H1 (cell line): ENCODE measurements at regions of chr10 and their contacts with region 1.

Region 1: DNA sequence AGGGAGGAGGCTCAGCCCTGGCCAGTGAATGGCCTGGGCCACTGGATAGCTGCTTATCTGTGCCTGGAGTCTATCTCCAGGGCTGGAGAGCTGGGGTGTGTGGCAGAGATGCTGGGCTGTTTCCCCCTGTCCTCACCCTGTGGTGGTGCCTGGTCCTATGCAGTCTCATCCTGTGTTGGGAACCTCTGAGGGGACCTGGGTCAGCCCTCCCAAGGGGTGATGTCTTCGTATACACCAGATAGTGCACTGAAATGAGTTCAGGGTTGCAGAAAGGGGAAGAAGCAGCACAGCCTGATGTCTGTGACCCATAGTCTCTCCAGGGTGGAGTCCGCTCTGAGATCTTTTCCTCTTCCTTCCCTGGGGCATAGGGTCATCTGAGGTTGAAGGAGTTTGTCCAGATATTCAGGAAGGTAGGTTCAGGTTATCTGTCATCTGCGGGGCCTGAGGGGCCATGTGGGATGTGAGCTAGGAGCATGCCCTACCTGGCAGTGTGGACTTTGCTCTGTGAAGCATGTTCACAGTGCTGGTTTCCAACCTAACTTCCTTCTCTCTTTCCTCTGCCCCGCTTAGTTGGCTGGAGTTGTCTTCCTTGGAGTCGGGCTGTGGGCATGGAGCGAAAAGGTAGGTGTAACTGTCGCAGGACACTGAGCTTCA is 33.4 kb upstream of the SH2D4B start:
- DNase-seq: no peak
- H3K4me3 ChIP-seq: no peak overlapping the region
- H3K27ac ChIP-seq: 0 out of 2 replicates have a peak overlapping the region, but pooled peaks have one; percentile 7
- H3K4me1 ChIP-seq: peaks cover 5 to 32% (median 15%) of the 10 kb centered on the region in 4 experiments
- H3K27me3 ChIP-seq: no peaks in the 10 kb centered on the region
- CTCF ChIP-seq: no peak
- EP300 ChIP-seq: no peak
- POLR2A ChIP-seq: no peak
- RAD21 ChIP-seq: no peak

Region 2: GRCh38 chr10:80292607-80293239 is 211.6 kb before region 1 on chr10:
- CTCF ChIA-PET with region 1: no interaction called
- POLR2A ChIA-PET with region 1: no interaction called
- DNase-seq: no peak
- H3K4me3 ChIP-seq: no peak overlapping the region
- H3K27ac ChIP-seq: no peak overlapping the region
- H3K4me1 ChIP-seq: peaks cover 0 to 9% (median 2%) of the 10 kb centered on the region in 4 experiments; a peak in 3 of 7 replicates
- H3K27me3 ChIP-seq: no peaks in the 10 kb centered on the region
- CTCF ChIP-seq: no peak
- EP300 ChIP-seq: no peak
- POLR2A ChIP-seq: no peak
- RAD21 ChIP-seq: no peak

Region 3: GRCh38 chr10:80382989-80383388 is 121.3 kb before region 1 on chr10:
- CTCF ChIA-PET with region 1: interaction called, 106 read pairs
- POLR2A ChIA-PET with region 1: interaction called, 3 read pairs
- DNase-seq: peak in 1 of 2 experiments; percentile 49
- H3K4me3 ChIP-seq: no peak overlapping the region
- H3K27ac ChIP-seq: no peak overlapping the region
- H3K4me1 ChIP-seq: no peaks in the 10 kb centered on the region
- H3K27me3 ChIP-seq: no peaks in the 10 kb centered on the region
- CTCF ChIP-seq: peak in 2 of 3 experiments; percentile 58 to 78; a peak in 3 of 4 replicates
- EP300 ChIP-seq: no peak
- POLR2A ChIP-seq: no peak
- RAD21 ChIP-seq: peak; percentile 82 to 83

Region 4: DNA sequence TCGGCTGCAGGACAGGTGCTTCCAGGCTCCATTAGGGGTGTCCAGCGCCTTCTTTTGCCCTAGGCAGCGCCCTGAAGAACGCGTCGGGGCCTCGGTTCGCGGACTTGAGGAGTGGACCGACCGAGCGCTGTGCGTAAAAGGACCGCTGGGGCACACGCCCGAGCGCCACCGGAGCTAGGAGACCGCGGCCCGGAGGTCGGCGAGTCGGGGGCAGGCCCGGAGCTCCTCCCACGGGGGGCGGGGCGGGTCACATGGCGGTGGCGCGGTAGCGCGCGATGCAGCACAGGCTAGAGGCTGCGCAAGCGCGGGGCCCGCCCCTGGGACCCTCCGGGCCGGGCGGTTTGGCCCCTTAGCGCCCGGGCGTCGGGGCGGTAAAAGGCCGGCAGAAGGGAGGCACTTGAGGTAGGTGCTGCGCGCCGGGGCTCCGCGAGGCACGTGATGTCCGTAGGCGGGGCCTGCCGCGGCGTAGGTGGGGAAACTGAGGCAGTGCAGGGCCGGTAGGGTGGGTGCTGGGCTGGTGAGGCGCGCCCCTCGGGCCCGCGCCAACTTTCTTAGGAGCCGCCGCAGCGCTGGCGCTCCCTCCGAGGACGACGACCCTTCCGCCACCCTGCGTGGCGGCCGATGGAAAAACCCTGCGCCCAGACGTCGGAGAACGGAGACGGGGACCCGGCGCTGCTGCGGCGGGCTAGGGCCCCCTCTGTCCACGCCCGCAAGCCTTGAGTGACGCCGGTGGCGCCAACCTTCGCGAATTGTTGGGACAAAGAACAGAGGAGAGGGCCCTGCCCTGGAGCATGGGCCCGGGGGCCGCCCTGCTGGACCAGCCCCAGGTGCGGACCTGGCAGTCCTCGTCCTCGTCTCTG is 95.8 kb before region 1 on chr10 and contains the start of gene PRXL2A:
- CTCF ChIA-PET with region 1: interaction called, 22 read pairs
- POLR2A ChIA-PET with region 1: interaction called, 4 read pairs
- DNase-seq: peak; percentile 50 to 97
- H3K4me3 ChIP-seq: peak within 1 kb of the TSS; percentile 50 to 65 (median 60)
- H3K27ac ChIP-seq: no peak within 1 kb of the TSS
- H3K4me1 ChIP-seq: peaks cover 0 to 5% (median 2%) of the 10 kb centered on the region in 4 experiments; a peak in 5 of 7 replicates
- H3K27me3 ChIP-seq: peaks cover 0 to 10% (median 6%) of the 10 kb centered on the region in 4 experiments; a peak in 3 of 7 replicates
- CTCF ChIP-seq: no peak
- EP300 ChIP-seq: no peak; a peak in 1 of 3 replicates
- POLR2A ChIP-seq: 0 out of 3 replicates have a peak, but pooled peaks of 1 of the 2 experiments have one; percentile 17
- RAD21 ChIP-seq: no peak
- total RNA-seq, gene PRXL2A: 58.3 and 60.1 TPM in 2 replicates

Region 5: DNA sequence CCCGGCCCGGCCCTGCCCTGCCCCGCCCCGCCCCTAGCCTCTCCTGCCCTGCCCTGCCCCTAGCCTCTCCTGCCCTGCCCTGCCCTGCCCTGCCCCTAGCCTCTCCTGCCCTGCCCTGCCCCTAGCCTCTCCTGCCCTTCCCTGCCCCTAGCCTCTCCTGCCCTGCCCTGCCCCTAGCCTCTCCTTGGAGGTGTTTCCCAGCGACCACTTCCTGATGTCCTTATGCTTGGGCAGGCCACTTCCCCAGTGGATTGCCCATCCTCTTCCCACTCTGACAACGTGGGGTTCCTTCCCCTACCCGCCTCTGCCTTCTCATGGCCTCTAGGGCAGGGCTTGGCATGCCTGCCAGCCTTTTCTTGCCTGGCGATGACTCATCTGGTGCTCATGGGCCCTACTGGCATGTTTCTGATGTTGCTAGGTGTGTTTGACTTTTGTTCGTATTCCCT is 74.7 kb before region 1 on chr10:
- CTCF ChIA-PET with region 1: interaction called, 15 read pairs
- POLR2A ChIA-PET with region 1: no interaction called
- DNase-seq: no peak
- H3K4me3 ChIP-seq: no peak overlapping the region
- H3K27ac ChIP-seq: no peak overlapping the region
- H3K4me1 ChIP-seq: no peaks in the 10 kb centered on the region
- H3K27me3 ChIP-seq: no peaks in the 10 kb centered on the region
- CTCF ChIP-seq: no peak
- EP300 ChIP-seq: no peak
- POLR2A ChIP-seq: no peak
- RAD21 ChIP-seq: no peak

Region 6: DNA sequence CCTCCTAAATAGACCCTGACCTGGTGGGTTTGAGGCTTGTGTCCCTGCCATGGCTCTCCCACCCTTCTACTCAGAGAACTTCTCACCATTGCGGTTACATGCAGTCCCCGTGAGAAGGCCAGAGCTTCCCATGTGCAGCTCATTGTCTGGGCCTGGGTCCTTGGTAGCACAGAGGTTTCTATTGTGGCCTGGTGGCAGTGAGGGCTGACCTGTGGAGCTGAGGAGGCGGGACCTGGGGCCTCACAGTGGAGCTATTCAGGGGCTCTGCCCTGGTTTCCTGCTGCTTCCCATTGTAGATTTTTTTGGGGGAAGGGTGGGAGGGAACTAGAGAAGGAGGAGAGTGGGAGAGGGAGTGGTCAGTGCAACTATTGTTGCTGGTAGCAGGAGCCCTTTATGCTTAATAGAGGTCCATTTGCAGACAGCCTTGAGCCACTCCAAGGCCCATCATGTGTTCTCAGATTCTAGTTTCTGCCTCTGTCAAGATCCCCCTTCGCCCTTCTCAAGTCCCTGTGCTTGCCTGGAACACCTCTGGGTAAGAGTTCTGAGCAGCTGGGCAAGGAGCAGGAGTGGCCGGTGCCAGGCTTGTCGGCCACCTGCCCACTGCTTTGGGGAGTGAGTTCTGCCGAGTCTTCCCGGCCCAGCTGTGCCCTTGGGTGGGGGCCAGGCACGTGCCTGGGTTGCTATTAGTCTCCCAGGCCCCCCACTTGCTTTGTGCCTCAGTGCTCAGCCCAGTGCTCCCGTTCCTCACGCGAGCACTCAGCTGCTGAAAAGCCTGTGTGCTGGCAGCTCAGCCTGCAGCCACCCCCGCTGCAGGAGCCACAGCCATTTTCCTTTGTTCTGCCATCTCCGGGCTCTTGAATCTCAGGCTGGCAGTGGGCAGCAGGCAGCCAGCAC is 39.5 kb before region 1 on chr10:
- CTCF ChIA-PET with region 1: interaction called, 1,263 read pairs
- POLR2A ChIA-PET with region 1: interaction called, 10 read pairs
- DNase-seq: peak in 1 of 2 experiments; percentile 68
- H3K4me3 ChIP-seq: peak overlapping the region; percentile 10 to 55 (median 30); a peak in 6 of 8 replicates
- H3K27ac ChIP-seq: peak overlapping the region; percentile 91
- H3K4me1 ChIP-seq: peaks cover 43 to 62% (median 55%) of the 10 kb centered on the region in 4 experiments
- H3K27me3 ChIP-seq: peaks cover 0 to 13% (median 6%) of the 10 kb centered on the region in 4 experiments; a peak in 4 of 7 replicates
- CTCF ChIP-seq: no peak
- EP300 ChIP-seq: no peak
- POLR2A ChIP-seq: peak in 1 of 2 experiments; percentile 75; a peak in 2 of 3 replicates
- RAD21 ChIP-seq: no peak

Region 7: DNA sequence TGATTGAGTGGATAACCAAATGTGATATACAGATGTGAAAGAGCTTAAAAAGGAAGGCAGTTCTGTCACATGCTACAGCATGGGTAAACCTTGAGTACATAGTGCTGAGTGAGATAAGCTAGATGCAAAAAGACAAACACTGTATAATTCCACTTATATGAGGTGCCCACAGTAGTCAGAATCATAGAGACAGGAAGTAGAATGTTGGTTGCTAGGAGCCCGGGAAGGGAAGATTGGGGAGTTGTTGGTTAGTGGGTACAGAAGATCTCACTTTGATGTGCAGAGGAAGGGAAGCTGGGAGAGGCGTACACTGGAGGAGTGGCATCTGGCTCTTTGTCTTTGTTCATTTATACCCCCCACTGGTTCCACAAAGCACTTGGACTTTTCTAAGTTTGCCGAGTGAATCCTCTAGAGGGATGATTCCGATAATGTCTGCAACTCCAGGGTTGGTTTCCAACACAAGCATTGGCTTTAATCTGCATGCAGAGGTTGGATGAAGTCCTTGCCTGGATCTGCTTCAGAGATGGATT is 10.7 kb before region 1 on chr10:
- CTCF ChIA-PET with region 1: interaction called, 66 read pairs
- POLR2A ChIA-PET with region 1: interaction called, 3 read pairs
- DNase-seq: no peak
- H3K4me3 ChIP-seq: no peak overlapping the region
- H3K27ac ChIP-seq: no peak overlapping the region
- H3K4me1 ChIP-seq: peaks cover 0 to 9% (median 5%) of the 10 kb centered on the region in 4 experiments; a peak in 5 of 7 replicates
- H3K27me3 ChIP-seq: no peaks in the 10 kb centered on the region
- CTCF ChIP-seq: no peak
- EP300 ChIP-seq: no peak
- POLR2A ChIP-seq: no peak
- RAD21 ChIP-seq: no peak

Region 8: GRCh38 chr10:80567291-80567690 is 63.0 kb after region 1 on chr10:
- CTCF ChIA-PET with region 1: no interaction called
- POLR2A ChIA-PET with region 1: no interaction called
- DNase-seq: peak in 1 of 2 experiments; percentile 28
- H3K4me3 ChIP-seq: no peak overlapping the region
- H3K27ac ChIP-seq: no peak overlapping the region
- H3K4me1 ChIP-seq: no peaks in the 10 kb centered on the region
- H3K27me3 ChIP-seq: no peaks in the 10 kb centered on the region
- CTCF ChIP-seq: peak in 1 of 3 experiments; percentile 12; a peak in 1 of 4 replicates
- EP300 ChIP-seq: no peak
- POLR2A ChIP-seq: no peak
- RAD21 ChIP-seq: no peak

Region 9: GRCh38 chr10:80946957-80947726 is 442.9 kb after region 1 on chr10:
- CTCF ChIA-PET with region 1: no interaction called
- POLR2A ChIA-PET with region 1: no interaction called
- DNase-seq: no peak
- H3K4me3 ChIP-seq: no peak overlapping the region
- H3K27ac ChIP-seq: no peak overlapping the region
- H3K4me1 ChIP-seq: peaks cover 0 to 5% (median 0%) of the 10 kb centered on the region in 4 experiments; a peak in 1 of 7 replicates
- H3K27me3 ChIP-seq: no peaks in the 10 kb centered on the region
- CTCF ChIP-seq: no peak
- EP300 ChIP-seq: no peak
- POLR2A ChIP-seq: no peak
- RAD21 ChIP-seq: no peak